ENCODE measurements at regions of chr16 and their contacts with region 1.

Region 1: DNA sequence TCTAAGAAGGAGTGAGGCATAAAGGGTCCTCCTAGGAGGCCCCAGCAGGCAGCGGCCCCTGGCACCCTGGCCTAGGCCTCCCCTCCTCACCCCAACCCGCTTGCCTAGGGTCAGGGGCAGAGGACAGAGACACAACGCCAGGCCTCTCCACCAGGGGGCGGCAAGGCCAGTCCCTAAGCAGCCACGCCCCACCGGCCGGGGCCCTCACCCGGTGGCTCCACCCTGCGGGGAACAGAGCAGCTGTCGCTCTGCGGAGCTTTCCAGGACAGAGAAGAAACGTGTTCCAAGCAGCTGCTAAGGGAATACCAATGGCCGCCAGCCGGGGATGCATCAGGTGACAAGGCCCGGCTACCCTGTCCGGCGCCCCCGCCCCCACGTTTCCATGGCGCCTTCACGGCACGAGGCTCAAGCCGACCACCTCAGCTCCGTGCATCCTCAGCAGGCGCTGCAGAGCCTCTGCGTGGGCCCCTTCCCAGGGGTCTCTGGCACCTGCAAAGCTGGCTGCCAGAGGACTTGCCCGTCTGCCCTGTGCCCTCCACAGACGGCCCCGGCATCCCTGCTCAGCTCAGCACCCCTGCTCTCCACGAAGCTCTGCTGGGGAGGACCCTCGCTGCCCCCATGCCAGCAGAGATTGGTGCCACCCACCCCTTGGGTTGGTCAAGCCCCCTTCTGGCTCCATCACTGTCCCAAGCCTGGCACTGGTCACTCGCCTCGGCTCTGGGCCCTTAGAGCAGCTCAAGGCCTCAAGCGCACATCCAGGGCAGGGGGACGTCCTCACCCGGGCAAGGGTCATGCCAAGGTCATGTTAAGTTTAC is 5.6 kb downstream of the ZNF598 start:
- DNase-seq: peak; percentile 92
- H3K4me3 Mint-ChIP-seq: no peak overlapping the region
- H3K27ac Mint-ChIP-seq: no peak overlapping the region
- H3K4me1 Mint-ChIP-seq: peaks cover 37% of the 10 kb centered on the region
- H3K27me3 Mint-ChIP-seq: no peaks in the 10 kb centered on the region

Region 2: DNA sequence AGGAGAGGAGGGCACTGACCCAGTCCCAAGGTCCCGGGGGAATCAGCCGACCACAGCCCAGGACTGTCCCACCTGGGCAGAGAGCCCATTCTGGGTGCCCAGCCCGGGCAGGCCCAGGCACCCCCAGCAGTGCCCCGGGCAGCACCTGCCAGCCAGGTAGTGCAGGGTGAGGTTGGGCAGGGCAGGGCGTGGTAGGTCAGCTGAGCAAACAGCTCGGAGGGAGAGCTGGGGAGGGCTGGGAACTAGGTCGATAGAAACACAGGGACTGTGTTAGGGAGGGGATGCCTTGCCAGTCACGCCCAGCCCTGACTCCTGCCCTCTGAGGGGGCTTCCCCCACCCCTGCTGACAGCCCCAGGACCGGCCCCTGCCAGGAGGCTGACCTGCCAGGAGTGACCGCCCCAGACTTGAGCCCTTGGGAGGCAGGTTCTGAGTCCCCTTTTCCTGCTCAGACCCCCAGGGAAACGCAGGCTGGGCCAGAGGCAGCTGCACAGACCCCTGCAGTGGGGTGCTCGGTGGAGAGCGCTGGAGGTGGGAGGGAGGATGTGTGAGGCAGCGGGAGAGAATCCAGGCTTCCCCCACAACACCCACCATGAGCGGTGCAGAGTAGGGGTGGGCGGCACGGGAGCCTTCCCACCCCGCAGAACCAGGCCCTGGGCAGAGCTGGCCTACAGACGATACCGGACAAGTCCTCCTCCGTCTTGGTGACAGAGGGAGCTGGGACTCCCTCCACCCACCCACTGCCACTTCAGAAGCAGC is 90.5 kb before region 1 on chr16:
- CTCF ChIA-PET with region 1: no interaction called
- POLR2A ChIA-PET with region 1: no interaction called
- intact Hi-C with region 1: no loop called
- DNase-seq: no peak
- H3K4me3 Mint-ChIP-seq: no peak overlapping the region
- H3K27ac Mint-ChIP-seq: no peak overlapping the region
- H3K4me1 Mint-ChIP-seq: no peaks in the 10 kb centered on the region
- H3K27me3 Mint-ChIP-seq: peaks cover 27% of the 10 kb centered on the region

Region 3: GRCh38 chr16:1983544-1984346 is 20.3 kb before region 1 on chr16 and contains the start of gene GFER:
- CTCF ChIA-PET with region 1: interaction called, 15 read pairs
- POLR2A ChIA-PET with region 1: interaction called, 5 read pairs
- intact Hi-C with region 1: no loop called
- DNase-seq: peak; percentile 88
- H3K4me3 Mint-ChIP-seq: peak within 1 kb of the TSS; percentile 81
- H3K27ac Mint-ChIP-seq: peak within 1 kb of the TSS; percentile 58
- H3K4me1 Mint-ChIP-seq: peaks cover 15% of the 10 kb centered on the region
- H3K27me3 Mint-ChIP-seq: peaks cover 28% of the 10 kb centered on the region
- total RNA-seq, gene GFER: 34.4 to 37.5 TPM

Region 4: DNA sequence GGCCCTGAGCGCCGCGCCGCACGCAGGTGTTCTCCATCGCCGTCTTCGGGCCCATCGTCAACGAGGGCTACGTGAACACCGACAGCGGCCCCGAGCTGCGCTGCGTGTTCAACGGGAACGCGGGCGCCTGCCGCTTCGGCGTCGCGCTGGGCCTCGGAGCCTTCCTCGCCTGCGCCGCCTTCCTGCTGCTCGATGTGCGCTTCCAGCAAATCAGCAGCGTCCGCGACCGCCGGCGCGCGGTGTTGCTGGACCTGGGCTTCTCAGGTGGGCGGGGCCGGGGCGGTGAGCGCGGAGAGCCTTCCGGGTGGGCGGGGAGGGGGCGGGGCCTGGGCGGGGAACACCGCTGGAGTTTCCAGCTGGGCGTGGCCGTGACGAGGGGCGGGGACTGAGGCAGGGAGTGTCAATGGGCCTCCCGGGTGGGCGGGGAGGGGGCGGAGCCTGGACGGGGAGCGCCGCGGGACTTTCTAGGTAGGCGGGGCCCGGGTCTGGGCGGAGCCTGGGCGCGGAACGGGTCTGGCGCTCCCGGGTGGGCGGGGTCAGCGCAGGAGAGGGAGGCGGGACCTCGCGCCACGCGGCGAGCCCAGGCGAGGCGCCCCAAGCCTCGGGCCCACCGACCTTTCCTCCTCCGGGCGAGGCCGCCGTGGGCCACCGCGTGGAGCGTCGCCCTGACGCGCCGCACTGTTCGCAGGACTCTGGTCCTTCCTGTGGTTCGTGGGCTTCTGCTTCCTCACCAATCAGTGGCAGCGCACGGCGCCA is 11.9 kb before region 1 on chr16:
- CTCF ChIA-PET with region 1: interaction called, 18 read pairs
- POLR2A ChIA-PET with region 1: interaction called, 4 read pairs
- intact Hi-C with region 1: loop called (anchors 2 kb)
- DNase-seq: peak; percentile 99
- H3K4me3 Mint-ChIP-seq: peak overlapping the region; percentile 71
- H3K27ac Mint-ChIP-seq: no peak overlapping the region
- H3K4me1 Mint-ChIP-seq: peaks cover 25% of the 10 kb centered on the region
- H3K27me3 Mint-ChIP-seq: peaks cover 12% of the 10 kb centered on the region

Region 5: DNA sequence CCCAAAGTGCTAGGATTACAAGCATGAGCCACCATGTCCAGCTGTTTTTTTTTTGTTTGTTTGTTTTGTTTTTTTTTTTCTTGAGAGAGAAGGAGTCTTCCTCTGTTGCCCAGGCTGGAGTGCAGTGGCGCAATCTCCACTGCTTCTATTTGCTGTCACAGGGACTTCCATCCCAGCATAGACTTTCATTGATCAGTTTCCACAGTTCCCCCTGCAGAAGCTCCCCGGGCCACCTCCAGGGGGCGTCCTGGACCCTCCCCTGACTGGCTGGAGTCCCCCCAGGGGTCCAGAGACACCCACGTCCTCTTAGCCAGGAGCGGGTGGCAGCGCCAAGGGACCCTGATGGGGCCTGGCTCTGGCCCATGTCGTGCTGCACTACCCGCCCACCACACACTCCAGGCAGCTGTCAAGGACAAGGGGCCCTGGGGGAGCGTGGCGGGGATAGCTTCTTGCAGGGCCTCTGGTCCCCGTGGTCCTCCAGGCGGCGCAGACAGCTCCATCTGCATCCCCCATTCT is 12.4 kb after region 1 on chr16:
- CTCF ChIA-PET with region 1: interaction called, 11 read pairs
- POLR2A ChIA-PET with region 1: no interaction called
- intact Hi-C with region 1: no loop called
- DNase-seq: peak; percentile 38
- H3K4me3 Mint-ChIP-seq: no peak overlapping the region
- H3K27ac Mint-ChIP-seq: no peak overlapping the region
- H3K4me1 Mint-ChIP-seq: peaks cover 4% of the 10 kb centered on the region
- H3K27me3 Mint-ChIP-seq: peaks cover 19% of the 10 kb centered on the region

Region 6: GRCh38 chr16:2047330-2048115 is 43.5 kb after region 1 on chr16 and contains the starts of genes NTHL1 and TSC2:
- CTCF ChIA-PET with region 1: interaction called, 10 read pairs
- POLR2A ChIA-PET with region 1: no interaction called
- intact Hi-C with region 1: no loop called
- DNase-seq: peak; percentile 97
- H3K4me3 Mint-ChIP-seq: peak within 1 kb of the TSS; percentile 89
- H3K27ac Mint-ChIP-seq: no peak within 1 kb of the TSS
- H3K4me1 Mint-ChIP-seq: peaks cover 13% of the 10 kb centered on the region
- H3K27me3 Mint-ChIP-seq: no peaks in the 10 kb centered on the region
- total RNA-seq, gene NTHL1: 24.3 to 26.2 TPM
- total RNA-seq, gene TSC2: 56.6 to 63.9 TPM

Region 7: GRCh38 chr16:2142942-2143877 is 139.2 kb after region 1 on chr16:
- CTCF ChIA-PET with region 1: interaction called, 25 read pairs
- POLR2A ChIA-PET with region 1: no interaction called
- intact Hi-C with region 1: no loop called
- DNase-seq: peak; percentile 29
- H3K4me3 Mint-ChIP-seq: no peak overlapping the region
- H3K27ac Mint-ChIP-seq: no peak overlapping the region
- H3K4me1 Mint-ChIP-seq: peaks cover 2% of the 10 kb centered on the region
- H3K27me3 Mint-ChIP-seq: no peaks in the 10 kb centered on the region

Region 8: GRCh38 chr16:2317231-2318020 is 313.4 kb after region 1 on chr16:
- CTCF ChIA-PET with region 1: no interaction called
- POLR2A ChIA-PET with region 1: no interaction called
- intact Hi-C with region 1: no loop called
- DNase-seq: no peak
- H3K4me3 Mint-ChIP-seq: no peak overlapping the region
- H3K27ac Mint-ChIP-seq: no peak overlapping the region
- H3K4me1 Mint-ChIP-seq: no peaks in the 10 kb centered on the region
- H3K27me3 Mint-ChIP-seq: no peaks in the 10 kb centered on the region

Measured in activated CD4-positive, alpha-beta memory T cell treated with anti-CD3 and anti-CD28 coated beads for 36 hours (primary cell).